ENCODE measurements at regions of chr12 and their contacts with region 1.

Region 1: GRCh38 chr12:40010899-40011774 is 94.7 kb downstream of the SLC2A13 start:
- DNase-seq: peak in 1 of 2 donors; percentile 48
- ATAC-seq: peak; percentile 90
- H3K4me3 ChIP-seq: no peak overlapping the region
- H3K27ac ChIP-seq: peak overlapping the region in 1 of 2 donors; percentile 28
- H3K4me1 ChIP-seq: peaks cover 0 to 4% of the 10 kb centered on the region in 2 donors
- H3K27me3 ChIP-seq: no peaks in the 10 kb centered on the region

Region 2: DNA sequence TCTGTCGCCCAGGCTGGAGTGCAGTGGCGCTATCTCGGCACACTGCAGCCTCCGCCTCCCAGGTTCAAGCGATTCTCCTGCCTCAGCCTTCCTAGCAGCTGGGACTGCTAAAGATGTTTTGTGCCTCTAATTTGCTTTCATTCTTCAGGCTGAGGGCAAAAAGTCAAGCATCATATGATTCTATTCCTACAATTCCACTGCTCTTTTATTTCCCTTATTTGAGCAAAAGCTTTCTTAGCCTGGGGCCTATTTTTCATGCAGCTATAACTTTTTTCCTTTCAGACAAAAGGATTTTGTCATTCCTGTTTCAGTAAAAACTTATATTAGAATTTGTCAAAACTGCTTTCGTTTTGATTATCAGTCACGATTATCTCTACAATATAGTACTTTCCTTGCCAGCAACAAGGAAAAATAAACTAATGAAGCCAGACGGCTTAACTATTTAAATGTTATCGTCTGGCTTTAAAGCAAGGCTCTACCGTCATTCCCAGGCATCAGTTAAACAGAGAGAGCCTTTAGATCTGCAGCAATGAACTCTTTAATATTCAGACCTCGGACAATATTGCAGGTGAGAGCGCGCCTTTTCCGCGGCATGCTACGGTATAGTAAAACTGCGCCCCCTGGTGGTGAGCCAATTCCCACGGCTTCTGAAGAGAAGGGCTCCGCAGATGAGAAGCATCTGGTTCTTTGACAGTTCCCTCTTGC is 96.1 kb after region 1 on chr12:
- intact Hi-C with region 1: loop called (anchors 2 kb)
- DNase-seq: peak; percentile 90 to 97
- ATAC-seq: peak; percentile 84
- H3K4me3 ChIP-seq: peak overlapping the region; percentile 70 to 81
- H3K27ac ChIP-seq: no peak overlapping the region
- H3K4me1 ChIP-seq: peaks cover 0 to 6% of the 10 kb centered on the region in 2 donors
- H3K27me3 ChIP-seq: no peaks in the 10 kb centered on the region

Region 3: DNA sequence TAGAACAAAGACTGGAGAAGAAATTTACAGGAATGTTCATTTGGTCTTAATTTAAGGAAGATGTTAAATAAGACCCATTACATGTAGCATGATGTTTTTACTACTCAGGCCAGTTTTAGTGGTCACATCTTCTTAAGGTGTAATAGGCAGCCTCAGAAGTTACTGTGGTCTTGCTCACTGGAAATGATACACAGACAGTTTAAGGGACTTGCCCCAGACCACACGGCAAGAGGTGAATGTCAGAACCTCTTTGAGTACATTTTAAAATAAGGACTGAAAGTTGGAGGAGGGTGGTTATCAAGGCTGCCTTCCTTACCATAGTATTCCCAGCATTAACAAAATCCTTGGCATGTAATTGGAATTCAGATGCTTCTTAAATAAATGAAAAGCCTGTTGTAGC is 251.5 kb after region 1 on chr12:
- intact Hi-C with region 1: no loop called
- DNase-seq: no peak
- ATAC-seq: no peak
- H3K4me3 ChIP-seq: no peak overlapping the region
- H3K27ac ChIP-seq: no peak overlapping the region
- H3K4me1 ChIP-seq: no peaks in the 10 kb centered on the region
- H3K27me3 ChIP-seq: no peaks in the 10 kb centered on the region

Region 4: GRCh38 chr12:40312982-40313576 is 301.9 kb after region 1 on chr12:
- intact Hi-C with region 1: loop called in 1 of 2 experiments (anchors 10 kb)
- DNase-seq: no peak
- ATAC-seq: no peak
- H3K4me3 ChIP-seq: no peak overlapping the region
- H3K27ac ChIP-seq: no peak overlapping the region
- H3K4me1 ChIP-seq: no peaks in the 10 kb centered on the region
- H3K27me3 ChIP-seq: no peaks in the 10 kb centered on the region